PC-9 (cell line): ENCODE measurements at regions of chr5 and their contacts with region 1.

Region 1: DNA sequence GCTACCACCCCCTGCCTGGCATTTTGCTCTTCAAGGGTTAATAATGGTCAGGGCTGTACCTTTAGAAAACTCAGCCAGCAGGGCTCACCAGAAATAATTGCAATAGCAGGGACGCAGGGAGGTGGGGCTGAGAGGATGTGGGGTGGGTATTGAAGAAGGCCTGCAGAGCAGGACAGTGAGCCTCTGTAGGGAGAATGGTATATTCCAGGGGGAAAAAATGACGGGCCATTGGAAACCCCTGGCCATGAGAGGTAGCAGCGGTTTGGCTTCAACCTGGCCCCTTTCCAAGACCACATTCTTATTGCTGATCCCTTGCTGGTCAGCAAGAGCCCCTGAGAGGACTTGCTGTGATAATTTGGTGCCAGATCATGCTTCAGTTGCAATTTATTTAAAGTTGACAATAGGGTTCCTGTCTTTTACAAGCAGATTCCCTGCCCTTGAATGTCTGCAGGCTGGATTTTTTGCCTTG is 36.7 kb upstream of the CTNNA1 start:
- DNase-seq: peak; percentile 70 to 83
- H3K4me3 ChIP-seq: peak overlapping the region; percentile 27; the same call in 1 of the 2 replicates
- H3K27ac ChIP-seq: peak overlapping the region; percentile 89
- H3K4me1 ChIP-seq: peaks cover 24% of the 10 kb centered on the region
- H3K27me3 ChIP-seq: no peaks in the 10 kb centered on the region
- CTCF ChIP-seq: no peak

Region 2: GRCh38 chr5:138696503-138697191 is 19.8 kb before region 1 on chr5:
- CTCF ChIA-PET with region 1: interaction called, 11 read pairs
- POLR2A ChIA-PET with region 1: no interaction called
- intact Hi-C with region 1: no loop called
- DNase-seq: peak; percentile 44 to 50
- H3K4me3 ChIP-seq: no peak overlapping the region
- H3K27ac ChIP-seq: no peak overlapping the region
- H3K4me1 ChIP-seq: peaks cover 23% of the 10 kb centered on the region
- H3K27me3 ChIP-seq: no peaks in the 10 kb centered on the region
- CTCF ChIP-seq: no peak

Region 3: DNA sequence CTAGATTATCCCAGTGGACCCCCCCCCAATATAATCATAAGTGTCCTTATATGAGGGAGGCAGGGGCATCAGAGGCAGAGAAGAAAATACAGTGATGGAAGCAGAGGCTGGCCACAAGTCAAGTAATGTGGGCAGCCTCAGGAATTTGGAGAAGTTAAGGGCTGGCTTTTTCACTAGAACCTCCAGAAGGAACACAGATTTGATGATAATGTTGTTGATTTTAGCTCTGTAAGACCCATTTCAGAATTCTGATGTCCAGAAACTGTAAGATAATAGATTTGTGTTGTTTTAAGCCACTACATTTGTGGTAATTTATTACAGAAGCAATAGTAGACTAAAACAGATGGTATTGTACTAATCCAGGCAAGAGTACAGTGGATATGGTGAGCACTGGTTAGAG is 195.0 kb after region 1 on chr5:
- CTCF ChIA-PET with region 1: no interaction called
- POLR2A ChIA-PET with region 1: no interaction called
- intact Hi-C with region 1: no loop called
- DNase-seq: no peak
- H3K4me3 ChIP-seq: no peak overlapping the region
- H3K27ac ChIP-seq: no peak overlapping the region
- H3K4me1 ChIP-seq: no peaks in the 10 kb centered on the region
- H3K27me3 ChIP-seq: no peaks in the 10 kb centered on the region
- CTCF ChIP-seq: no peak